Activated naive CD4-positive, alpha-beta T cell treated with anti-CD3 and anti-CD28 coated beads for 36 hours (primary cell): ENCODE measurements at regions of chr2 and their contacts with region 1.

Region 1: DNA sequence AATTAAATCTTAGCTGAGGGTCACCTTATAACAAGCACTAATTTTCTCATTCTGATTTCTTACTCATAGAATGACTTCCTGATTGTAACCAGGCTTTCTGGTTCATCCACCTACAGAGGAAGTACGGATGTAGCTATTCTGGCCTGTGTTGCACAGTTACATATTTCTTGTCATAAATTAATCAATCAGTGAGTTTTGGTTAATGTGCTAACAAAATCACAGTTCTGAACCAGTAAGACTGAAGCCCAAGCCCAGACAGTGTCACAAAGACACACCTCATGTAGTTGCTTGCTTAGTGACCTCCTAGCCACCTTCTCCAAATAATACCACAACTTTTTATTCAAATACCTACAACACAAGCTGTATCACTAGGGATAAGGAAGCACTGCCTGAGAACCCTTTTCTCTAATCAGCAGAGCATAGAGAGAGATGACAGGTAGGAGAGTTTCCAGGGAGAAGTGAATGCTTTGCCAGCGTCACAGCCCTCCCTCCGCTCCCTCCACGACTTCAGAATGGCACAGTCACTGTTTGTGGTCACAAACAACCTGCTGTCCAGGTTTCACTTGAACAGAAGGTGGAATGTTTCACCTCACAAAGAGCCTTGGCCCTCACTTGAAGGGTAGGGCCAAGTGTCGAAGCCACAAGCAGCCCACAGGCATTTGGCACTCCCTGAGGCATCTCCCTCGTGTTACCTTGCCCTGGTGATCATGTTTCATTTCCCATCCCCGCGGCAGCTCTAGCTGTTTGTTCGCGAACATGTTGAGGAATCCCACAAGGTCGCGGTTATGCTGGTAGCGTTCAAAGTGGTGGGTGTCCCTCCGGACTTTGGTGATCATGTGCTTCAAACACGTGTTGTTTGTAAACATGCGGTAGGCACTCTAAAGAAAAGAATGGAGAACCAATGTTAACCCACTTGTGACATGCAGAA is 120.8 kb upstream of the STK17B start:
- DNase-seq: no peak
- H3K4me3 Mint-ChIP-seq: no peak overlapping the region
- H3K27ac Mint-ChIP-seq: no peak overlapping the region
- H3K4me1 Mint-ChIP-seq: peaks cover 46% of the 10 kb centered on the region
- H3K27me3 Mint-ChIP-seq: no peaks in the 10 kb centered on the region

Region 2: GRCh38 chr2:196149948-196150347 is 142.2 kb before region 1 on chr2:
- CTCF ChIA-PET with region 1: no interaction called
- intact Hi-C with region 1: no loop called
- DNase-seq: no peak
- H3K4me3 Mint-ChIP-seq: peak overlapping the region; percentile 36
- H3K27ac Mint-ChIP-seq: peak overlapping the region; percentile 91
- H3K4me1 Mint-ChIP-seq: peaks cover 89% of the 10 kb centered on the region
- H3K27me3 Mint-ChIP-seq: no peaks in the 10 kb centered on the region

Region 3: GRCh38 chr2:196233021-196233804 is 58.9 kb before region 1 on chr2:
- CTCF ChIA-PET with region 1: interaction called, 3 read pairs
- intact Hi-C with region 1: loop called (anchors 1 kb)
- DNase-seq: peak; percentile 34
- H3K4me3 Mint-ChIP-seq: no peak overlapping the region
- H3K27ac Mint-ChIP-seq: peak overlapping the region; percentile 91
- H3K4me1 Mint-ChIP-seq: peaks cover 92% of the 10 kb centered on the region
- H3K27me3 Mint-ChIP-seq: no peaks in the 10 kb centered on the region

Region 4: DNA sequence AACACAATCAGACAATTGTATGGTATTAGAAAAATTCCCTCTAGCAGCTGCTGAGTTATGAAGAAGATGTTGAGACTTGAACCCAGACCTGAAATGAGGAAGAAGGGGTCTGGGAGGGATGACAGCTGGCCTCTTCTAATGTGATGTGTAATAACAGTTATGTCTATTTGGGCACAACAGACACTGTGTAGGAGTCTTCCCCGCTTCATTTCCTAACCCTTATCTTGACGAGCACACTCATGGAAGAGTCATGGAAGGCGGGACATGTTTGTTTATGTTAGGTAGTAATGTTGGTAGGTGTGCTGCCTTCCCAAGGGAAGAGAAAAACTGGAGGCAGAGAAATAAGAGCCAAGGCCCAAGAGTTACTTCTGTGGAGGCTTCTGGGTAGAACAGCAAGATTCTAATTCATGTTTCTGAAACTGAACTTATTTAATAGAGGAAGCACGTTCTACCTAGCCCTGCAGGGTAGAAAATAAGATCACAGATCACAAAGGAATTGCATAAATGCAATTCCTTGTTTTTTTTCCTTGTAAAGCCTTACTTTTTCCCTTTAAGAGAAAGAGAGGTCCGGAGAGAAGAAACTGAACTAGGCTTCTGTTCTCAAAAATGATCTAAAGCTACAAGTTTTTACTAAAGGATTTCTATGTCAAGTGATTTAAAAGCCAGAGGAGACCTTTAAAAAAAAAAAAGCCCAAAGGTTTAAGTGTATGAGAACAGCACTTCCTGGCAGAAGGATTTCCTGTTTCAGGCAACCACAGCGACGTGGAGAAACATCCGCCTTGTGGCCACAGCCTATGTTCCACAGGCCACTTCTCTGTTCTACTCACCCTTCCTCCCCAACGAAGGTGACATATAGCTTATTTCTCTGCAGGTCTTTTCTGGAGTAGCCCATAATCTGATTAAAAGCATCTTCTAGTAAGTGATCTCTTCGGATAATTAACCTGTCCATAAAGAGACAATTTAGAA is 52.2 kb before region 1 on chr2:
- CTCF ChIA-PET with region 1: interaction called, 3 read pairs
- intact Hi-C with region 1: loop called (anchors 1 kb)
- DNase-seq: peak; percentile 93
- H3K4me3 Mint-ChIP-seq: peak overlapping the region; percentile 49
- H3K27ac Mint-ChIP-seq: peak overlapping the region; percentile 88
- H3K4me1 Mint-ChIP-seq: peaks cover 85% of the 10 kb centered on the region
- H3K27me3 Mint-ChIP-seq: no peaks in the 10 kb centered on the region

Region 5: DNA sequence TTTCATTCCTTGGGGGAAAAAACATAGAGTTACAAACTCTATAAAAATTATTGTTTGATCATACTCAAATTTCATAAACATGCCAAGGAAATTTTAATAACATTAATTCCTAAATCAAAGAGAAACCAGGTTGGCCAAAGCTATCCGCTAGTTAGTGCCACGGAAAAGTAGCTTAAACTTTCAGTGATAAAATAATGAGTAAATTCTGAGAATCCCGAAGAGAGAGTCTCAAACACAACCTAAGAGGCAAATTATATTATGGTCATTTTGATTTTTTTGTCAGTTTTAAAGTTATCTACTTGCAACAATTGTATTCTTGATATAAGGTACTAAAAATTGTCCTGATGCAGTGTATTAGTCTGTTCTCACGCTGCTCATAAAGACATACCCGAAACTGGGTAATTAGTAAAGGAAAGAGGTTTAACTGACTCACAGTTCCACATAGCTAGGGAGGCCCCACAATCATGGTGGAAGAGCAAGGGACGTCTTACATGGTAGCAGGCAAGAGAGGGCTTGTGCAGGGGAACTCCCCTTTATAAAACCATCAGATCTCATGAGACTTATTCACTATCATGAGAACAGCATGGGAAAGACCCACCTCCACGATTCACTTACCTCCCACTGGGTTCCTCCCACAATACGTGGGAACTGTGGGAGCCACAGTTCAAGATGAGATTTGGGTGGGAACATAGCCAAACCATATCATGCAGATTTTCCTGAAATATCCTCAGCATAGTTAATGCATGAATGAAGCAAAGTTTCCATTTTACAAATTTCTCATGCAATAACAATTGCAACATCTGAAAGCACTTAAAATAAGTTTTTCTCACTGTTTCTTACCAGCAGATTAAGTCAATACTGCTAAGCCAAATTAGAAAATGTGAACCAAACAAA is 85.1 kb after region 1 on chr2:
- CTCF ChIA-PET with region 1: no interaction called
- intact Hi-C with region 1: loop called (anchors 1 kb)
- DNase-seq: peak; percentile 62
- H3K4me3 Mint-ChIP-seq: no peak overlapping the region
- H3K27ac Mint-ChIP-seq: peak overlapping the region; percentile 50
- H3K4me1 Mint-ChIP-seq: peaks cover 12% of the 10 kb centered on the region
- H3K27me3 Mint-ChIP-seq: no peaks in the 10 kb centered on the region

Region 6: DNA sequence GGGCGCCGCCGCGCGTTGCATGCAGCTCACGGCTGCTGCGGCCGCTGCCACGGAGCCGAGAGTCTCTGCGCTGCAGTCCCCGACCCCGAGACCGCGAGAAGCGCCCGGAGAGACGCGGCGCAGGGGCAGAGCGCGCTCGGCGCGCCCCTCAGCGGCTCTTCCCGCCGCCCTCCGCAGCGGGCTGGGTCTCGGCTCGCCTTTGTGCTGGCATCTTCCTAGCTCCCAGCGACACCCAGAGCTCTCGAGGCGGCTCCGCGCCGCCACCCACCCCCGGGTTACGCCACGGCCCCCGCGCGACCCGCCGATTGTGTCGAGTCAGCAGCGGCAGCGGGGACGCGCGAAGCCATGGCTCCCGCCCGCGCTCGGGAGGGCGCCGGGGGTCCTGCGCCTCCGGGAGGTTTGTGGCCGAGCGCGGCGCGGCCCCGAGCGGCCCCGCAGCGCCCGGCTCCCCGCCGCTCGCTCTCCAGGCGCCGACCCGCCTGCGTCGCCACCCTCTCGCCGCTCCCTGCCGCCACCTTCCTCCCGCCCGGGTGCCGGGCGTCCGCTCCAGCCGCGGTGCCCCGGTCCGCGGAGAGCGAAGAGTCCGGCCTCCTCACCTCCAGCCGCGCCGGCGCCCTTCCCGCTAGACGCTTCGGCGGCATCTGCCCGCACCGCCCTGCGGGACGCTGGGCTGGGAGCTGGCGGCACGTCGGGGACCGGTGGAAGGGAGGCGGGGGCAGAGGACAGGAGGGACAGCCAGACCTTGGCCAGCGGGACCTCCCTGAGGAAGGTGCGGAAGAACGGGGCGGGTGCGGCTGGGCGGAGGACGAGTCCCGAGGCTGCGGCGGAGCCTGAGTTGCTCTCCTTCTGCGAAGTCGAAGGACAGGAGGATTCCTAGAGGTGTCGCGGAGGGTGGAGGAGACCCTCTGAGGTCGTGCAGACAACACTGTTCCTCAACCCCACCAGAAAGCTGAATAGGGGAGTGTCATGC is 301.1 kb after region 1 on chr2:
- CTCF ChIA-PET with region 1: no interaction called
- intact Hi-C with region 1: loop called (anchors 5 kb)
- DNase-seq: peak; percentile 25
- H3K4me3 Mint-ChIP-seq: peak within 1 kb of the TSS; percentile 67
- H3K27ac Mint-ChIP-seq: no peak within 1 kb of the TSS
- H3K4me1 Mint-ChIP-seq: peaks cover 7% of the 10 kb centered on the region
- H3K27me3 Mint-ChIP-seq: peaks cover 56% of the 10 kb centered on the region

Region 7: DNA sequence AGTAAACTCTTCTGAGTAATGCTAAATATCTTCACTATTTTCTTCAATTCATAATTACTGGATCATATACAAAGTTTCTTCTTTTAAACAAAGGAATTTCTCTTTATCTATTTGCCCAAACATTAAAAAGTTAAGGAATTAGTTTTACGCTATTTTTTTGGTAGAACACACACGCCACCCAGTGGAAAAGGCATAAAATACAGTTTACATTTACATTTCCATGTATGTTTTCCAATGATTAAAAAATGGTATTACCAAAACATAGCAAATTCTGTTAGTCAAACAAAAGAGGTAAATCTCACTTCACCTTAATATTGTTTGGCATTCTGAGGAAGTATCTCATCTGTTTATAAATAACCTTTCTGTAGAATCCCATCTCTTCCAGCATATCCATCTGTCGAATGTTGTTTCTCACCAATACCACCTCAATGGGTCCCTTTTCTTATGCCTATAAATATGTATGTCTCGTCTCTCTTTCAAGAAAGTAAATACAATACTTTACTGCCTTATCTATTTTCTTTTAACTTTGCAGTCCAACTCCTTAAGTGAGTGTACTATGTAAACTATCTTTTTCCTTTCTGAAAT is 1485.8 kb after region 1 on chr2:
- CTCF ChIA-PET with region 1: no interaction called
- intact Hi-C with region 1: loop called (anchors 5 kb)
- DNase-seq: peak; percentile 52
- H3K4me3 Mint-ChIP-seq: no peak overlapping the region
- H3K27ac Mint-ChIP-seq: no peak overlapping the region
- H3K4me1 Mint-ChIP-seq: no peaks in the 10 kb centered on the region
- H3K27me3 Mint-ChIP-seq: peaks cover 5% of the 10 kb centered on the region